HCT116 (cell line): ENCODE measurements at regions of chr6 and their contacts with region 1.

Region 1: DNA sequence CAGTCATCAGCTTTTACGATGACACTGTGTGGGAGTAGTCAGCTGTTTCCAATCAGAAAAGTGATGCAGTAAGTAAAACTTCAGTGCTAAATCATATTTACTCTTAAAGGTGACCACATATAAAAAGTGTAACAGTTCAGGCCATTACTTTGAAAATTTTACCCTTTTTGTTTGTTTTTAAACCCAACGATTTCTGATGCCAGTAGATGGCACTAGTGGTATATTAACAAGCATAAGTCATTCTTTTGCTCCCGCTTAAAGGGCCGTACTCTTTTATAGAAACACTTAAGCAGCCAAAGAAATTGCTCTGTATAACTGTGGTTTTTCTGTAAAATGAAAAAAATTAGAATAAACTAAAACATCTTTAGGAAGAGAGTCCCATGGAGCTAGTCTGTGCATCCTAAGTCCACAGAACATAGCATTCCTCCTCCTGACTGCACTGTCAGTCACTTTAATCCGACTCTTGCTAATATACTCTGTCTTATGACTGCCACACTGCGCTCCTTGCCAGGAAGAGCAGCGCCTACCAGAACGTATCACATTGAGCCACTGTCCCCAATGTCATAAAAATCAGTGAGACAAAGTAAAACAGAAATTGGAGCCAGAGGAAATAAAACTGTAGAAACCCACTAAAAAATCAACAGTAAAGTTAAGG is 25.0 kb downstream of the HEBP2 start:
- DNase-seq: peak; percentile 21
- ATAC-seq: peak; percentile 72
- H3K4me3 ChIP-seq: no peak overlapping the region
- H3K27ac ChIP-seq: no peak overlapping the region
- H3K4me1 ChIP-seq: no peaks in the 10 kb centered on the region
- H3K27me3 ChIP-seq: no peaks in the 10 kb centered on the region
- CTCF ChIP-seq: peak; percentile 57 to 81 (median 75); a peak in 5 of 6 replicates
- POLR2A ChIP-seq: no peak
- RAD21 ChIP-seq: peak; percentile 87

Region 2: DNA sequence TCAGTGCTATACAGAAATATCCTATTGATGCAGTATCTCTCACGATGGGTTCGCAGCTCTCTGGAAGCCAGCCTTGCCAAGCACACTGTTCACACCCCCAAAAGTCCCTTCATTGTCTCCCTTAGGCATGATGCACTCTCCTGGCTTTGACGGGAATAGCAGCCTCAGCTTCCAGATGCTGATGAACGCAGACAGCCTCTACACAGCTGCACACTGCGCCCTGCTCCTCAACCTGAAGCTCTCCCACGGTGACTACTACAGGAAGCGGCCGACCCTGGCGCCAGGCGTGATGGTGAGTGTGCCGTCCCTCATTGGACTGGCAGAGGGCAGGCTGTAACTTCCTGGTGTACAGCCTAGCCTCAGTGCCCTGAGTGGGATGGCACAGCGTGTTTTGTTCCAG is 150.7 kb before region 1 on chr6:
- CTCF ChIA-PET with region 1: no interaction called
- POLR2A ChIA-PET with region 1: no interaction called
- RAD21 ChIA-PET with region 1: no interaction called
- intact Hi-C with region 1: no loop called
- DNase-seq: no peak
- ATAC-seq: peak; percentile 89
- H3K4me3 ChIP-seq: no peak overlapping the region
- H3K27ac ChIP-seq: no peak overlapping the region
- H3K4me1 ChIP-seq: no peaks in the 10 kb centered on the region
- H3K27me3 ChIP-seq: no peaks in the 10 kb centered on the region
- CTCF ChIP-seq: peak in 2 of 3 experiments; percentile 38 to 43; a peak in 4 of 6 replicates
- POLR2A ChIP-seq: no peak
- RAD21 ChIP-seq: no peak; the same call in 1 of the 2 replicates

Region 3: GRCh38 chr6:138509371-138509770 is 80.3 kb after region 1 on chr6:
- CTCF ChIA-PET with region 1: interaction called, 14 read pairs
- POLR2A ChIA-PET with region 1: no interaction called
- RAD21 ChIA-PET with region 1: no interaction called
- intact Hi-C with region 1: loop called (anchors 1 kb)
- DNase-seq: peak; percentile 44
- ATAC-seq: peak; percentile 73; the same call in 1 of the 2 replicates
- H3K4me3 ChIP-seq: no peak overlapping the region
- H3K27ac ChIP-seq: no peak overlapping the region
- H3K4me1 ChIP-seq: peaks cover 2 to 8% of the 10 kb centered on the region in 2 experiments; a peak in 2 of 4 replicates
- H3K27me3 ChIP-seq: no peaks in the 10 kb centered on the region
- CTCF ChIP-seq: peak; percentile 54 to 78 (median 71); a peak in 5 of 6 replicates
- POLR2A ChIP-seq: no peak
- RAD21 ChIP-seq: peak; percentile 85

Region 4: GRCh38 chr6:138588805-138589434 is 159.8 kb after region 1 on chr6:
- CTCF ChIA-PET with region 1: no interaction called
- POLR2A ChIA-PET with region 1: no interaction called
- RAD21 ChIA-PET with region 1: interaction called in 1 of 2 experiments, 4 read pairs
- intact Hi-C with region 1: loop called (anchors 2 kb)
- DNase-seq: peak; percentile 67
- ATAC-seq: peak; percentile 64
- H3K4me3 ChIP-seq: no peak overlapping the region
- H3K27ac ChIP-seq: no peak overlapping the region
- H3K4me1 ChIP-seq: peaks cover 6 to 25% of the 10 kb centered on the region in 2 experiments; a peak in 3 of 4 replicates
- H3K27me3 ChIP-seq: no peaks in the 10 kb centered on the region
- CTCF ChIP-seq: peak; percentile 76 to 94 (median 88); a peak in 5 of 6 replicates
- POLR2A ChIP-seq: no peak
- RAD21 ChIP-seq: peak; percentile 91